ENCODE measurements at regions of chr15 and their contacts with region 1.

Region 1: DNA sequence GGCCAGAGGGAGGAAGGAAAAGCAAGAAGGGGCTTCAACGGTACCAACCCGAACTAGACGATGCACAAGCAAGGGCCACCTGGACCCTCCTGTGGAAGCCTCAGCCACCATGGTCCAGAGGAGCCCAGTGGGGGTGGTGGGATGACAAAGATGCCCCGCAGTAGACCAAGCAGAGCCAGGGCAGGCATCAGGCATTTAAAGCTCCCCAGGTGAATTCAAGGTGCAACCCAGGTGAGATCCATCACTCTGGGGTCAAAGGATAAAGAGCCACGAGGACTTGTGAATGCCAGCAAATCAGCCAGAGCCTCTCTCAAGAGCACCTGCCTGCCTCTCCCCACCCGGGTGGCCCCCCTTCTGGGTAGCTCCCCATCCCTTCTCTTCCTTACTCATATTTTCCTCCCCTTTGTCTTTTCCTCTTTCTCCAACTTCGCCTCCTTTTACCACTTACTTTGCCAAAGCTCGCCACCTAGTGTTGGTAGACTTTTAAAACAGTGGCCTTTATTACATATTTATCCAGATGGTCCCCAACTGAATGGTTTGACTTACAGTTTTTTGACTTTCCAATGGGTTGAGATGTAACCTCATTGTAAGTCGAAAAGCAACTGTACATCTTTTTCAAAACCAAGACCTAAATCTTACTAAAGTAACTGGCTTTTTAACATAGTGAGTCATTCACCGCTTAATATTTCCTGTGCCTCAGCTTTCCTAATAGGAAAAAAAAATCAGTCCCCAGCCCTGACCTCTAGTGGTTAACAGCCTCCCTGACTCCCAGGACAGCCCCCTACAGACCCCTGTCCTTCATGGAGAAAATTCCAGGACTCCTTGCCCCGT is 18.8 kb downstream of the PLA2G4F start:
- H3K4me3 Mint-ChIP-seq: no peak overlapping the region
- H3K27ac Mint-ChIP-seq: no peak overlapping the region
- H3K4me1 Mint-ChIP-seq: peaks cover 11% of the 10 kb centered on the region
- H3K27me3 Mint-ChIP-seq: peaks cover 18% of the 10 kb centered on the region

Region 2: GRCh38 chr15:41989259-41989933 is 148.2 kb before region 1 on chr15:
- intact Hi-C with region 1: loop called (anchors 2 kb)
- H3K4me3 Mint-ChIP-seq: no peak overlapping the region
- H3K27ac Mint-ChIP-seq: no peak overlapping the region
- H3K4me1 Mint-ChIP-seq: peaks cover 7% of the 10 kb centered on the region
- H3K27me3 Mint-ChIP-seq: peaks cover 7% of the 10 kb centered on the region

Region 3: GRCh38 chr15:42066764-42067415 is 70.8 kb before region 1 on chr15:
- intact Hi-C with region 1: loop called (anchors 1 kb)
- H3K4me3 Mint-ChIP-seq: no peak overlapping the region
- H3K27ac Mint-ChIP-seq: no peak overlapping the region
- H3K4me1 Mint-ChIP-seq: peaks cover 18% of the 10 kb centered on the region
- H3K27me3 Mint-ChIP-seq: peaks cover 13% of the 10 kb centered on the region

Region 4: DNA sequence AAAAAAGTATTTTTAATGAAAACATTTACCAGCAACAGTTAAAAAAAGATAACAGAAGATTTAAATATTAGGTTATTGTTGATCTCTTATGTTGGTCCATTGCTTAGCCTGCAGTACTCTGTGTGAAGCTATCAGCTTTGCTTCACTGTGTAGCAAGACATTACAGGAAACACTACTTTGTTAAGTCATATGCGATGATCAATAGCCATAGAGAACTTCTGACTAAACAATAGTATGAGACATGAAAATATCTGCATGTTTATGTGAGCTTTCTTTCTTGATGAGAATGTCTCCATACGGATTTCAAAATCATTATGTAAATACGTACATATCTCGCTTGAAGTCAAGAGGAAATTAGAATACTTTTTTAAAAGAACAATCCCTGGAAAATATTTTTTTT is 194.7 kb after region 1 on chr15:
- intact Hi-C with region 1: no loop called
- H3K4me3 Mint-ChIP-seq: no peak overlapping the region
- H3K27ac Mint-ChIP-seq: no peak overlapping the region
- H3K4me1 Mint-ChIP-seq: no peaks in the 10 kb centered on the region
- H3K27me3 Mint-ChIP-seq: no peaks in the 10 kb centered on the region